ENCODE measurements at regions of chr17 and their contacts with region 1.

Region 1: GRCh38 chr17:65990593-65990992 is 201.3 kb downstream of the CEP112 start:
- DNase-seq: no peak
- H3K4me3 ChIP-seq: no peak overlapping the region
- H3K27ac ChIP-seq: no peak overlapping the region
- H3K4me1 ChIP-seq: no peaks in the 10 kb centered on the region
- H3K27me3 ChIP-seq: no peaks in the 10 kb centered on the region
- CTCF ChIP-seq: no peak
- POLR2A ChIP-seq: no peak

Region 2: GRCh38 chr17:67629971-67630320 is 1639.4 kb after region 1 on chr17:
- intact Hi-C with region 1: loop called (anchors 10 kb)
- DNase-seq: no peak
- H3K4me3 ChIP-seq: no peak overlapping the region
- H3K27ac ChIP-seq: no peak overlapping the region
- H3K4me1 ChIP-seq: no peaks in the 10 kb centered on the region
- H3K27me3 ChIP-seq: no peaks in the 10 kb centered on the region
- CTCF ChIP-seq: peak in 1 of 3 donors; percentile 29
- POLR2A ChIP-seq: no peak